HCT116 (cell line): ENCODE measurements at regions of chr11 and their contacts with region 1.

Region 1: GRCh38 chr11:78564490-78565467 is 9.9 kb downstream of the NARS2 start:
- DNase-seq: peak; percentile 51
- ATAC-seq: peak; percentile 60; the same call in 1 of the 2 replicates
- H3K4me3 ChIP-seq: no peak overlapping the region
- H3K27ac ChIP-seq: no peak overlapping the region
- H3K4me1 ChIP-seq: peaks cover 0 to 7% of the 10 kb centered on the region in 2 experiments; a peak in 2 of 4 replicates
- H3K27me3 ChIP-seq: no peaks in the 10 kb centered on the region
- CTCF ChIP-seq: peak; percentile 51 to 71 (median 66)
- POLR2A ChIP-seq: no peak
- RAD21 ChIP-seq: peak; percentile 75

Region 2: DNA sequence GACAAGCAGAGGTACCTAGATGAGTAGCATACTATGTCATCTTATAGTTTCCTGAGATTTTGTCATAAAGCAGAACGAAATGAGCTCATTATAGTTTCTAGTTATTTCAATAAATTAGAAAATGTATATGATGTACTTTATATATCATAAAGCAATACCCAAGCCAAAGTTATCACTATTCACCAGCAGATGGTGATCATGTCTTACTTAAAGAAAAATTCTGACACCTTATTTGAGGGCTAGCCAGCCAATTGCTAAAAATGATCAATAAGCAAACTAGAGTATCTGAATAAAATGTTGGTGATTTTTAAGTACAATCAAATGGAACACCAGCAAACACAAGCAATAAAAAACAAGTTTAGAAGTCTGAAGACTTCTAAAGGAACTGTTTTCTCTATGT is 788.3 kb before region 1 on chr11:
- CTCF ChIA-PET with region 1: interaction called, 5 read pairs
- POLR2A ChIA-PET with region 1: no interaction called
- RAD21 ChIA-PET with region 1: no interaction called
- intact Hi-C with region 1: loop called (anchors 5 kb)
- DNase-seq: peak; percentile 19
- ATAC-seq: no peak
- H3K4me3 ChIP-seq: no peak overlapping the region
- H3K27ac ChIP-seq: no peak overlapping the region
- H3K4me1 ChIP-seq: no peaks in the 10 kb centered on the region
- H3K27me3 ChIP-seq: no peaks in the 10 kb centered on the region
- CTCF ChIP-seq: peak; percentile 32 to 47 (median 34); a peak in 4 of 6 replicates
- POLR2A ChIP-seq: no peak
- RAD21 ChIP-seq: peak; percentile 62

Region 3: GRCh38 chr11:78039919-78040671 is 524.7 kb before region 1 on chr11:
- CTCF ChIA-PET with region 1: no interaction called
- POLR2A ChIA-PET with region 1: no interaction called
- RAD21 ChIA-PET with region 1: no interaction called
- intact Hi-C with region 1: no loop called
- DNase-seq: no peak
- ATAC-seq: peak; percentile 57
- H3K4me3 ChIP-seq: peak overlapping the region; percentile 28 to 48
- H3K27ac ChIP-seq: peak overlapping the region; percentile 85
- H3K4me1 ChIP-seq: peaks cover 33 to 48% of the 10 kb centered on the region in 2 experiments
- H3K27me3 ChIP-seq: no peaks in the 10 kb centered on the region
- CTCF ChIP-seq: no peak
- POLR2A ChIP-seq: no peak
- RAD21 ChIP-seq: no peak

Region 4: DNA sequence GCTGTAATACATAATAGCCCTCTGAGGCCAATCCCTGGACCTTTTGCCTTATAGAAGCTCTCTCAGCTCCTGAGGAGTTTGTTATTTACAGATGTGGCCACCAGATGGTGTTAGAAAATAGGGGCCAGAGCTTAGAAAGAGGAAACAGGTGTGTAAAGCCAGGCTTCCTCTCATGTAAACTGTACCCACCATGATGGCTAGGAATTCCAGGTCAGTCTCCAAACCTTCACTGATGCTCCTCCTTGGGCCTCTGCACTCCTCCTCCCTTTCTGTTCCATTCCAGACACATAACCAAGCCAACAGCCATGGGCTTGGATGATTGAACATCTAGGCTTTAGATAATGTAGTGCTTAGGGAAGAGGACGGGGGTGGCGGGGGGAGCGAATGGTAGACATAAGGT is 336.3 kb before region 1 on chr11:
- CTCF ChIA-PET with region 1: interaction called, 51 read pairs
- POLR2A ChIA-PET with region 1: no interaction called
- RAD21 ChIA-PET with region 1: interaction called, 5 to 9 read pairs
- intact Hi-C with region 1: loop called (anchors 1 kb)
- DNase-seq: peak; percentile 32
- ATAC-seq: peak; percentile 88
- H3K4me3 ChIP-seq: no peak overlapping the region
- H3K27ac ChIP-seq: no peak overlapping the region
- H3K4me1 ChIP-seq: no peaks in the 10 kb centered on the region
- H3K27me3 ChIP-seq: no peaks in the 10 kb centered on the region
- CTCF ChIP-seq: peak; percentile 45 to 77 (median 47); a peak in 5 of 6 replicates
- POLR2A ChIP-seq: no peak
- RAD21 ChIP-seq: peak; percentile 79

Region 5: GRCh38 chr11:78416305-78417178 is 148.2 kb before region 1 on chr11:
- CTCF ChIA-PET with region 1: interaction called, 17 read pairs
- POLR2A ChIA-PET with region 1: no interaction called
- RAD21 ChIA-PET with region 1: no interaction called
- intact Hi-C with region 1: loop called (anchors 2 kb)
- DNase-seq: peak; percentile 27
- ATAC-seq: peak; percentile 58
- H3K4me3 ChIP-seq: peak overlapping the region; percentile 51 to 67
- H3K27ac ChIP-seq: no peak overlapping the region
- H3K4me1 ChIP-seq: peaks cover 5 to 19% of the 10 kb centered on the region in 2 experiments; a peak in 3 of 4 replicates
- H3K27me3 ChIP-seq: no peaks in the 10 kb centered on the region
- CTCF ChIP-seq: peak; percentile 30 to 57 (median 42); a peak in 5 of 6 replicates
- POLR2A ChIP-seq: no peak
- RAD21 ChIP-seq: peak; percentile 30; the same call in 1 of the 2 replicates

Region 6: GRCh38 chr11:78552881-78553280 is 11.9 kb before region 1 on chr11:
- CTCF ChIA-PET with region 1: interaction called, 11 read pairs
- POLR2A ChIA-PET with region 1: no interaction called
- RAD21 ChIA-PET with region 1: no interaction called
- intact Hi-C with region 1: no loop called
- DNase-seq: no peak
- ATAC-seq: no peak
- H3K4me3 ChIP-seq: no peak overlapping the region
- H3K27ac ChIP-seq: no peak overlapping the region
- H3K4me1 ChIP-seq: no peaks in the 10 kb centered on the region
- H3K27me3 ChIP-seq: no peaks in the 10 kb centered on the region
- CTCF ChIP-seq: no peak
- POLR2A ChIP-seq: no peak
- RAD21 ChIP-seq: no peak